CD8-positive, alpha-beta T cell (primary cell): ENCODE measurements at regions of chr7 and their contacts with region 1.

Region 1: GRCh38 chr7:143345428-143345900 is 17.0 kb downstream of the FAM131B start:
- DNase-seq: peak; percentile 33 to 83 (median 65)
- ATAC-seq: peak; percentile 99
- H3K4me3 ChIP-seq: peak overlapping the region; percentile 32 to 35
- H3K4me3 Mint-ChIP-seq: peak overlapping the region; percentile 69
- H3K27ac ChIP-seq: no peak overlapping the region
- H3K27ac Mint-ChIP-seq: no peak overlapping the region
- H3K4me1 ChIP-seq: peaks cover 5% of the 10 kb centered on the region
- H3K4me1 Mint-ChIP-seq: peaks cover 9% of the 10 kb centered on the region
- H3K27me3 ChIP-seq: no peaks in the 10 kb centered on the region
- H3K27me3 Mint-ChIP-seq: peaks cover 7% of the 10 kb centered on the region
- CTCF ChIP-seq: peak; percentile 64

Region 2: DNA sequence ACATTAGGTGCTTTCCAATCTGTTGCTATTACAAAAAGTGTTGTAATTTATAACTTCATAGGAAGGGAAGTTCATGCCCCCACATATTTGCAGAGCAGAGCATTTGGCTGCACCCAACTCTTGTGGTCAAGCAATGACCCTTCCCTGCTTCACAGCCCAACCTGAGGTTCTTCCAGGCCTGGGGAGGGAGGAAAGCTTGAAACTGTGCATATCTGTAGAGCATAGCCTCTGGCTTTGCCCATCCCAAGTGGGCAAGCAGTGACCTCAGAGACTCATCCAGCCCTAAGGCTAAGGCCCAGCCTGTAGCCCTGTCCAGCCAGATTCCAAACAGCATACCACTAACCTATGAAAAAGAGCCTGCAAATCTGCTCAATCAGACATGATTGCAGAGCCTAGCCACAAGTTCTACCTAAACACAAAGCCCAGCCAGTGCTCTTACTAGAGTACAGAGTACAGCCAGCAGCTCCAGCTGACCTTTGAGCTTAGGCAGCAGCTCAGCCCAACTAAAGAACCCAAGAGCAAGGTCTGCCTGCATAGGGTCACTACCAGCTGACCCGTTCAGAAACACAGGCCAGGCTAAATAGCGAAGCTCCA is 96.6 kb before region 1 on chr7:
- CTCF ChIA-PET with region 1: no interaction called
- POLR2A ChIA-PET with region 1: no interaction called
- intact Hi-C with region 1: no loop called
- DNase-seq: no peak
- ATAC-seq: no peak
- H3K4me3 ChIP-seq: no peak overlapping the region
- H3K4me3 Mint-ChIP-seq: no peak overlapping the region
- H3K27ac ChIP-seq: no peak overlapping the region
- H3K27ac Mint-ChIP-seq: peak overlapping the region; percentile 73
- H3K4me1 ChIP-seq: peaks cover 60% of the 10 kb centered on the region
- H3K4me1 Mint-ChIP-seq: peaks cover 79% of the 10 kb centered on the region
- H3K27me3 ChIP-seq: no peaks in the 10 kb centered on the region
- H3K27me3 Mint-ChIP-seq: no peaks in the 10 kb centered on the region
- CTCF ChIP-seq: no peak

Region 3: DNA sequence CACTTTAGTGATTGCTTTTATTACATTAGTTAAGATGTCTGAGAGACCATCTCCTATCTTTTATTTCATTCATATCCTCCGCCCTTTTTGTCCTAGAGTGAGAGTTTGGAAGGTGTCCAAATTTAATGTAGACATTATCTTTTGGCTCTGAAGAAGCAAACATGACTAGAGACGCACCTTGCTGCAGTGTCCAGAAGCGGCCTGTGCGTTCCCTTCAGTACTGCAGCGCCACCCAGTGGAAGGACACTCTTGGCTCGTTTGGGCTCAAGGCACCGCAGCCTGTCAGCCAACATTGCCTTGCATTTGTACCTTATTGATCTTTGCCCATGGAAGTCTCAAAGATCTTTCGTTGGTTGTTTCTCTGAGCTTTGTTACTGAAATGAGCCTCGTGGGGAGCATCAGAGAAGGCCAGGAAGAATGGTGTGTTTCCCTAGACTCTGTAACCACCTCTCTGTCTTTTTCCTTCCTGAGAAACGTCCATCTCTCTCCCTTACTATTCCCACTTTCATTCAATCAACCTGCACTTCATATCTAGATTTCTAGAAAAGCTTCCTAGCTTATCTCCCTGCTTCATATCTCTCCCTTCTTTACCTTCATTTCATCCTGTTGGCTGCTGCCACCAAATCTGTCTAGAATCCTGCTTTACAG is 39.9 kb before region 1 on chr7:
- CTCF ChIA-PET with region 1: interaction called, 7 read pairs
- POLR2A ChIA-PET with region 1: interaction called, 3 read pairs
- intact Hi-C with region 1: loop called in 1 of 2 experiments (anchors 5 kb)
- DNase-seq: peak; percentile 38 to 78 (median 71)
- ATAC-seq: peak; percentile 77
- H3K4me3 ChIP-seq: no peak overlapping the region
- H3K4me3 Mint-ChIP-seq: no peak overlapping the region
- H3K27ac ChIP-seq: no peak overlapping the region
- H3K27ac Mint-ChIP-seq: peak overlapping the region; percentile 39
- H3K4me1 ChIP-seq: peaks cover 3% of the 10 kb centered on the region
- H3K4me1 Mint-ChIP-seq: peaks cover 22% of the 10 kb centered on the region
- H3K27me3 ChIP-seq: no peaks in the 10 kb centered on the region
- H3K27me3 Mint-ChIP-seq: no peaks in the 10 kb centered on the region
- CTCF ChIP-seq: peak; percentile 58